IMR-90 (cell line): ENCODE measurements at regions of chr3 and their contacts with region 1.

Region 1: GRCh38 chr3:13091898-13092611 is 18.8 kb upstream of the IQSEC1 start:
- DNase-seq: peak; percentile 60
- ATAC-seq: peak; percentile 94
- H3K4me3 ChIP-seq: no peak overlapping the region
- H3K27ac ChIP-seq: no peak overlapping the region
- H3K4me1 ChIP-seq: no peaks in the 10 kb centered on the region
- H3K27me3 ChIP-seq: peaks cover 23% of the 10 kb centered on the region; the same call in 1 of the 2 replicates
- CTCF ChIP-seq: peak; percentile 80
- POLR2A ChIP-seq: no peak
- RAD21 ChIP-seq: peak; percentile 83

Region 2: DNA sequence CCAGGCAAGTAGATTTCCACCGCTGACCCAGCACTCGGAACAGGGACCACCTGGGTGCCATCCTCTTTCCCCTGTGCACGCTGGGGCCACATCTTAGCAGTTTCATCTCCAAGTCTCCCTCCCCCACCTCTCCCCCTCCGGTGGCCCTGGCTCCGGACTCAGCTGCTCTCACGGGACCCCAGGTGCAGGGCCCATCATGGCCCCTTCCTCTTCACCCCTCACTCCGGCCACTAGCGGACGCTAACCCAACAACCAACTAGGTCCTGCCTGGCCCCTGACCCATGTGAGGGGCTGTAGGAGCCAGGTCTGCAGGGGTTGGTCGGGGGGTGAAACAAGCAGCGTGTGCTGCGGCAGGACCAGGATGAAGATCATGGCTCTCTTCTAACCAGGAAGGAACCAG is 12.5 kb after region 1 on chr3:
- CTCF ChIA-PET with region 1: interaction called, 10 read pairs
- POLR2A ChIA-PET with region 1: no interaction called
- dilution Hi-C with region 1: no loop called
- in situ Hi-C with region 1: no loop called
- intact Hi-C with region 1: no loop called
- DNase-seq: no peak
- ATAC-seq: no peak
- H3K4me3 ChIP-seq: no peak overlapping the region
- H3K27ac ChIP-seq: no peak overlapping the region
- H3K4me1 ChIP-seq: no peaks in the 10 kb centered on the region
- H3K27me3 ChIP-seq: peaks cover 24% of the 10 kb centered on the region
- CTCF ChIP-seq: no peak
- POLR2A ChIP-seq: no peak
- RAD21 ChIP-seq: no peak

Region 3: DNA sequence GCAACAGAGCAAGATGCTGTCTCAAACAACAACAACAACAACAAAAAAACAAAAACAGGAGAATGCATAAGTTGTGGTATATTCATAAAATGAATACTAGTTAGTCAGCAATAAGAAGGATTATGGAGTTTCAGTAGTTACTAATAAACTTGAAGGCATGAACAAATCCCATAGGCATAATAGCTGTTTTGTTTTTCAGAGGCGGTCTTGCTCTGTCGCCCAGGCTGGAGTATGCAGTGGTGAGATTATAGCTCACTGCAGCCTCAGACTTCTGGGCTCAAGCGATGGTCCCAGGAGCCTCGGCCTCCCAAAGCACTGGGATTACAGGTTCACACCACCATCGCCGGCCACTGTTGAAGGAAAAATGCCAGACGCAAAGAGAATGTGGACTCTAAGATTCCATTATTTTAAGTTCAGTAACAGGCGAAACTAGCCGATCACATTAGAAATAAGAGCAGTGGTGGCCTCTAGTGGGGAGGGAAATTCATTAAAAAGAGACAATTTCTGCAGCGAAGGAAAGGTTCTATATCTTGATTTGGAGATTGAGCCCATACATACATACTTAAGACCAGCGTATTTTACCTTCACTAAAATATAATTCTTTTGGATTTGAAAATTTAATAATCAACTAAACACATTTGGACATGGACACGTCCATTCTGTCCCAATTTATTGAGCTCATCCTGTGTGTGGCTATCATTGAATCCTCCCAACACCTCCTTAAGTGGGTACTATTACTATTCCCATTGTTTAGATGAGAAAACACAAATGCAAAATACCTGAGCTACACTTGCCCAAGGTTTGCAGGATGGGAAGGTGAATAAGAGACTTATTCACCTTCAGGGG is 360.7 kb after region 1 on chr3:
- CTCF ChIA-PET with region 1: interaction called, 18 read pairs
- POLR2A ChIA-PET with region 1: no interaction called
- dilution Hi-C with region 1: no loop called
- in situ Hi-C with region 1: loop called (anchors 5 kb)
- intact Hi-C with region 1: loop called (anchors 1 kb)
- DNase-seq: peak; percentile 53
- ATAC-seq: peak; percentile 43; the same call in 1 of the 2 replicates
- H3K4me3 ChIP-seq: no peak overlapping the region
- H3K27ac ChIP-seq: no peak overlapping the region
- H3K4me1 ChIP-seq: peaks cover 3% of the 10 kb centered on the region; the same call in 1 of the 2 replicates
- H3K27me3 ChIP-seq: peaks cover 3% of the 10 kb centered on the region; the same call in 1 of the 2 replicates
- CTCF ChIP-seq: peak; percentile 66
- POLR2A ChIP-seq: no peak
- RAD21 ChIP-seq: peak; percentile 70

Region 4: GRCh38 chr3:13495921-13496723 is 404.1 kb after region 1 on chr3:
- CTCF ChIA-PET with region 1: interaction called, 3 read pairs
- POLR2A ChIA-PET with region 1: no interaction called
- dilution Hi-C with region 1: no loop called
- in situ Hi-C with region 1: no loop called
- intact Hi-C with region 1: loop called (anchors 1 kb)
- DNase-seq: peak; percentile 79
- ATAC-seq: peak; percentile 95
- H3K4me3 ChIP-seq: no peak overlapping the region
- H3K27ac ChIP-seq: no peak overlapping the region
- H3K4me1 ChIP-seq: 0 out of 2 replicates have a peak, but pooled peaks cover 1% of the 10 kb centered on the region
- H3K27me3 ChIP-seq: no peaks in the 10 kb centered on the region
- CTCF ChIP-seq: peak; percentile 98
- POLR2A ChIP-seq: peak; percentile 60; the same call in 1 of the 2 replicates
- RAD21 ChIP-seq: peak; percentile 100